ENCODE measurements at regions of chr18 and their contacts with region 1.

Region 1: GRCh38 chr18:61322265-61322873 is 10.9 kb upstream of the CDH20 start:
- H3K4me3 ChIP-seq: no peak overlapping the region
- H3K27ac ChIP-seq: no peak overlapping the region
- H3K4me1 ChIP-seq: no peaks in the 10 kb centered on the region
- CTCF ChIP-seq: peak; percentile 88

Region 2: DNA sequence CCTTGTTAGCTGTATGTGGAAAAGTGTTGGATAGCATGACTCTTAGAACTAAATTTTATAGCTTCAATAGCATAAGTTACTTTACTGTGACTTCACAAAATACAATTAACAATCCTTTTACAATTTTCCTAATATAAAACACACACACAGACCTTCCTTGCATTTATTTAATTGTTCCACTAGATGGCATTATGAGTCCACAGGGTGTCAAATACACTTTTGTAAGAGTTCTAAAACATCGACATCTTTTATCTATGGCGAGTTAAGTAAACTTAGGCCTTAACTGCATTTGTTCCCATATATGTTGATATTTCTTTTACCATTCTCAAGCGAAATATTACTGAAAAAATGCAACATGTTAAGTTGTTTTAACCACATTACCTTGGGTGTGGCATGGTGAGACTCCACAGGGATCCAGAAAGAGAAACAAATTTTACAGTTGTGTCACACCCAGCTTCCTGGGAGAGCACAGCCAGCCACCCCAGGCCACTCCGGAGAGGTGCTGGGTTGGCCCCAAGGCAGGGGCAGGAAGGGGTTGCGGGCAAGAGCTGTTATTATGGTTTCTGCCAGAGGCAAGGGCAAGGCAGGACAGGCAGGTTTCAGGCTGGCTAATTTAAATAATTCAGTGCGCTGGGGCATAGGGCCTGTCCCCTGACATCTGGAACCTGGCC is 637.4 kb before region 1 on chr18:
- CTCF ChIA-PET with region 1: interaction called, 11 read pairs
- POLR2A ChIA-PET with region 1: no interaction called
- H3K4me3 ChIP-seq: no peak overlapping the region
- H3K27ac ChIP-seq: no peak overlapping the region
- H3K4me1 ChIP-seq: no peaks in the 10 kb centered on the region
- CTCF ChIP-seq: no peak

Region 3: DNA sequence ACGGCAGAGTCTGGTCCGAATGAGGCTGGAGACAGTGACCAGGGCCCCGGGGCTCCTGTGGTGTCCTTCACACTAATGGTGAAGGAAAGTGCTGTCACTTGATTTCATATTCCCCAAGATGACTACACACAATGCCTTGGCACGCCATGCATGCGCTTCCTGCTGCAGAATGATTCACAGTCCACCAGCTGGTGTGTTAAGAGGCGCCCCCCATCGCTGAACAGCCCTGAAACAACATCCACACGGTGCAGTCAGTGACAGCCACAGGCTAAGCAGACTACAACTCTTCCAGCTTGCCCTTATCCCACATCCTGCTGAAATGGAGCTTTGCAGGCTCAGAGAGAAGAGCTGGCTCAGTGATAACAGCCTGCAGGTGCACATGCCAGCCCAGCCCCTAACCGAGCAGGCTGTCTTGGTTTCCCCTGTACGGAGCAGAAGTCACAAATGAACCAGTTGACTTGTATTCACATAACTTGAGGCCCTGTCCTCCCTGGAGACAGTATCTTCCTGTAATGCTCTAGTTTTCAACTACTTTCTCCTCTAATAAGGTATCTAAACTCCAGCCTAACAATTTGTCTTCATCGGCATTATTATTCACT is 13.5 kb before region 1 on chr18:
- CTCF ChIA-PET with region 1: interaction called, 10 read pairs
- POLR2A ChIA-PET with region 1: no interaction called
- H3K4me3 ChIP-seq: no peak overlapping the region
- H3K27ac ChIP-seq: no peak overlapping the region
- H3K4me1 ChIP-seq: no peaks in the 10 kb centered on the region
- CTCF ChIP-seq: no peak

Region 4: DNA sequence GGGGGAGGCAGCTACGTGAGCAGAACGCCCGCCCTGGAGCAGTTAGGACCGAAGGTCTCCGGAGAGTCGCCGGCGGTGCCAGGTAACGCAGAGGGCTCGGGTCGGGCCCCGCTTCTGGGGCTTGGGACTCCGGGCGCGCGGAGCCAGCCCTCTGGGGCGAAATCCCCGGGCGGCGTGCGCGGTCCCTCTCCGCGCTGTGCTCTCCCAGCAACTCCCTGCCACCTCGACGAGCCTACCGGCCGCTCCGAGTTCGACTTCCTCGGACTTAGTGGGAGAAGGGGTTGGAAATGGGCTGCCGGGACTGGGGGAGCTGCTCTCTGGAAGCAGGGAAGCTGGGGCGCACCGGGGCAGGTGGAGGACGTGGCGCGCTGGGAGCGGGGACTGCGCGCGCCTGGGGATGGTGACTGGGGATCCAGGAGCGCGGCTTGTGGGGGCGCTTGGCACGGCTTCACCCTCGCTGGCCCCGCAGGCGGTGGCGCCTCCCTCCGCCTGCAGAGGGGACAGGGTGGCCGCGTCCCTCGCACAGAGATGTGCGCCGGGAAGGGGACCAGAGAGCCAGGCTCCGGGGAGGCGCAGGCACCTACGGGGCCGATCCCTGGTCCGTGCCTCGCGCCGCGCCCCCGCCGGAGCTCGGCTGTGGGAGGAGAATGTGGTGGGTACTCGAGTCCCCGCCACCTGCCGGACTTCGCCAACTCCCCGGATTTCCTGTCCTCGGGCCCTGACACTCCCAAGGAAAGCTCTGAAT is 11.5 kb after region 1 on chr18:
- CTCF ChIA-PET with region 1: interaction called, 42 read pairs
- POLR2A ChIA-PET with region 1: no interaction called
- H3K4me3 ChIP-seq: peak overlapping the region; percentile 47
- H3K27ac ChIP-seq: peak overlapping the region; percentile 31; the same call in 1 of the 2 replicates
- H3K4me1 ChIP-seq: peaks cover 6% of the 10 kb centered on the region
- CTCF ChIP-seq: no peak

Region 5: GRCh38 chr18:61496374-61496773 is 174.0 kb after region 1 on chr18:
- CTCF ChIA-PET with region 1: interaction called, 290 read pairs
- POLR2A ChIA-PET with region 1: no interaction called
- H3K4me3 ChIP-seq: no peak overlapping the region
- H3K27ac ChIP-seq: no peak overlapping the region
- H3K4me1 ChIP-seq: no peaks in the 10 kb centered on the region
- CTCF ChIP-seq: no peak

Region 6: GRCh38 chr18:61502472-61502871 is 180.1 kb after region 1 on chr18:
- CTCF ChIA-PET with region 1: interaction called, 290 read pairs
- POLR2A ChIA-PET with region 1: no interaction called
- H3K4me3 ChIP-seq: no peak overlapping the region
- H3K27ac ChIP-seq: no peak overlapping the region
- H3K4me1 ChIP-seq: no peaks in the 10 kb centered on the region
- CTCF ChIP-seq: no peak

Measured in HEK293 (cell line).